ENCODE measurements at regions of chr13 and their contacts with region 1.

Region 1: GRCh38 chr13:52850396-52851136 is 2.1 kb upstream of the PCDH8 start:
- DNase-seq: peak; percentile 92

Region 2: DNA sequence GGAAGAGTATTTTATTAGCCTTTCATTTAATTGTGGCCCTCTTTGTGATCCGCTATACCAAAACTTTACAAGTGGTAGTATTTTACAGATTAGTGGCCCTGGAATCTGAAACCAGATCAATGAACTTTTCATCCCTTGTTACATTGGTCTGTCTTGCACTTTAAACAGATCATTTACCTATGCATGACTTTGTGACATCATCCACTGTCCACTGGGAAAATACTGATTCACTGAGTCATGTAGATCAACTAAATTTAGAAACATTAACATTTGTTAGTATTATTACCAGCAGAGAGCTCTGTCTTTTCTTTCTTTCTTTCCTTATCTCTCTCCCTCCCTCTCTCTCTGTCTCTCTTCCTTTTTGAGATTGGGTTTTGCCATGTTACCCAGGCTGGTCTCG is 19.6 kb before region 1 on chr13:
- intact Hi-C with region 1: no loop called
- DNase-seq: no peak

Region 3: GRCh38 chr13:52896827-52897659 is 46.5 kb after region 1 on chr13:
- intact Hi-C with region 1: loop called in 1 of 2 experiments (anchors 5 kb)
- DNase-seq: no peak

Region 4: GRCh38 chr13:52968074-52968700 is 117.6 kb after region 1 on chr13:
- intact Hi-C with region 1: loop called in 1 of 2 experiments (anchors 10 kb)
- DNase-seq: peak; percentile 87